T-cell (primary cell): ENCODE measurements at regions of chr1 and their contacts with region 1.

Region 1: GRCh38 chr1:239247299-239247698 is 139.1 kb upstream of the CHRM3 start:
- DNase-seq: no peak
- ATAC-seq: no peak
- H3K4me3 ChIP-seq: no peak overlapping the region
- H3K4me3 Mint-ChIP-seq: no peak overlapping the region
- H3K27ac ChIP-seq: no peak overlapping the region
- H3K27ac Mint-ChIP-seq: no peak overlapping the region
- H3K4me1 ChIP-seq: no peaks in the 10 kb centered on the region
- H3K4me1 Mint-ChIP-seq: no peaks in the 10 kb centered on the region
- H3K27me3 ChIP-seq: no peaks in the 10 kb centered on the region
- H3K27me3 Mint-ChIP-seq: no peaks in the 10 kb centered on the region

Region 2: DNA sequence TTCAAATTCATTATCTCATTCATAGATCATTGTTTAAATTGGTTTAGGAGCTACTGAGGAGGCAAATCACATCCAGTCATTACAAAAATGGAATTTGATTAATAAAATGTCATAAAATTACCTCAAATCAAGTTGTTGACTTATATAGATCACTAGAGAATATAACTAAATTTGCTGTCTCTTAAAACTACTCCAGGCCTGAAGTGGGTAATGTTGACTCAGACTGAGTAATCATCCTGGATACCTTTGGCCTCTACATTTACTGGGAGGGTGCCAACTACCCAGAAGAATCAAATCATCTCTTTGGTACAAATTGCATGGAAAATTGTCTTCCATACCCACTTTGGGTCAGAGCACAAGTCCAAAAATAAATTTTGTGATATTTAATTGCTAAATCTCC is 1555.9 kb after region 1 on chr1:
- CTCF ChIA-PET with region 1: no interaction called
- POLR2A ChIA-PET with region 1: interaction called in 1 of 2 experiments, 12 read pairs
- DNase-seq: no peak
- ATAC-seq: no peak
- H3K4me3 ChIP-seq: no peak overlapping the region
- H3K4me3 Mint-ChIP-seq: no peak overlapping the region
- H3K27ac ChIP-seq: no peak overlapping the region
- H3K27ac Mint-ChIP-seq: no peak overlapping the region
- H3K4me1 ChIP-seq: no peaks in the 10 kb centered on the region
- H3K4me1 Mint-ChIP-seq: no peaks in the 10 kb centered on the region
- H3K27me3 ChIP-seq: no peaks in the 10 kb centered on the region
- H3K27me3 Mint-ChIP-seq: no peaks in the 10 kb centered on the region